Vagina (tissue), 2 donors: ENCODE measurements at regions of chrX and their contacts with region 1.

Region 1: GRCh38 chrX:46211079-46211478 is 334.1 kb downstream of the ZNF674 start:
- DNase-seq: no peak
- H3K4me3 ChIP-seq: no peak overlapping the region
- H3K27ac ChIP-seq: no peak overlapping the region
- H3K4me1 ChIP-seq: no peaks in the 10 kb centered on the region
- H3K27me3 ChIP-seq: no peaks in the 10 kb centered on the region
- CTCF ChIP-seq: no peak
- POLR2A ChIP-seq: no peak

Region 2: DNA sequence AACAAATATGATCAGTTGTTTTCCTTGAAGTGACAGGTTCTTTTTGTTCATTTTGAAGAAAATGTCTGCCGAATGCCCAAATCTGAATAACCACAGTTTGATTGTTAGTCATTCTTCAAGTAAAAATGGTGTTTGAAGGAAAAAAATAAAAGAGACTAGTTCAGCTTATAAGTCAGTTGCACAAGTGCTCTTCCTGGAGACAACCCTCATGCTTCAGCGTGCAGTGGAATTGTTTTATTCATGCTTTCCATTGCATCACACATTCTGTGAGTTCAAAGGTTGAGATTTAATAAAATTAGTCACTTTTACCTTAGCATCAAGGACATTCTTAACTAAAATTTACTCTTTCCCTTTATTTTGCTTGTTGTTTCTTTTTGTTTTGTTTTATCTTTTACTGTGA is 70.8 kb before region 1 on chrX:
- intact Hi-C with region 1: no loop called
- DNase-seq: no peak
- H3K4me3 ChIP-seq: no peak overlapping the region
- H3K27ac ChIP-seq: no peak overlapping the region
- H3K4me1 ChIP-seq: no peaks in the 10 kb centered on the region
- H3K27me3 ChIP-seq: no peaks in the 10 kb centered on the region
- CTCF ChIP-seq: no peak
- POLR2A ChIP-seq: no peak

Region 3: GRCh38 chrX:46251755-46252154 is 40.7 kb after region 1 on chrX:
- intact Hi-C with region 1: loop called (anchors 1 kb)
- DNase-seq: no peak
- H3K4me3 ChIP-seq: no peak overlapping the region
- H3K27ac ChIP-seq: no peak overlapping the region
- H3K4me1 ChIP-seq: no peaks in the 10 kb centered on the region
- H3K27me3 ChIP-seq: no peaks in the 10 kb centered on the region
- CTCF ChIP-seq: no peak
- POLR2A ChIP-seq: no peak